HepG2 (cell line): ENCODE measurements at regions of chr2 and their contacts with region 1.

Region 1: DNA sequence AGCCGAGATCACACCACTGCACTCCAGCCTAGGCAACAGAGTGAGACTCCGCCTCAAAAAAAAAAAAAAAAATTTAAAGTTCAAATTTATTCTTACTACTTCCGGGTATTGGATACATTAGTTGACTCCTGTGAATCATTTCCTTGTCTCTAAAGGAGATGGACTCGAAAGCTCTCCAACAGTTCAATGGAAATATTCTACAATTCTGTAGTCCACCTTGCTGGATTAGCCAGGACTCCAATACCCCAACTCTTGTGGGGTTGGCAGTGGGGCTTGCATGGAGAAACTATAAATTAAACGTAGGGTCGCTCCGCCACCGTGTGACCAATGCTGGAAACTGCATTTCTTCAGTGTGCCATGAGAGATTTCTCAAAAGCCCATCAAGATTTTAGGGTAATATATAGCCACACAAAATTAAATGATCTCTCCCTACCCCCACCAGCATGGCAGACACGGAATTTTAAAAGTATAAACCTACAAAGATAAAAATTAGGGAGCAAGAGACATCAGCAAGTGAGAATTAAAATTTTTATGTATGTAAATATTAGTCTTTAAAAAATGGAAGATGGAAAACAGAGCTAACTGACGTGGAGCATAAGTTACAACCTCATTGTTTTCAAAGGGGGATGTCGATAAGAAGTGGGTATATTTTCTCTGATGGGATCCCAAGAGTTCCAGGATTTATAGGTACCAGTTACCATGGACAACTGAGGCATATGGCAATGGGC is 27.8 kb upstream of the GAREM2 start:
- DNase-seq: peak; percentile 69
- ATAC-seq: peak; percentile 58
- H3K4me3 ChIP-seq: no peak overlapping the region
- H3K27ac ChIP-seq: no peak overlapping the region
- H3K4me1 ChIP-seq: no peaks in the 10 kb centered on the region
- H3K27me3 ChIP-seq: peaks cover under 1 to 13% of the 10 kb centered on the region in 2 experiments; a peak in 2 of 5 replicates
- CTCF ChIP-seq: peak; percentile 83
- EP300 ChIP-seq: no peak
- POLR2A ChIP-seq: no peak
- RAD21 ChIP-seq: peak; percentile 86

Region 2: DNA sequence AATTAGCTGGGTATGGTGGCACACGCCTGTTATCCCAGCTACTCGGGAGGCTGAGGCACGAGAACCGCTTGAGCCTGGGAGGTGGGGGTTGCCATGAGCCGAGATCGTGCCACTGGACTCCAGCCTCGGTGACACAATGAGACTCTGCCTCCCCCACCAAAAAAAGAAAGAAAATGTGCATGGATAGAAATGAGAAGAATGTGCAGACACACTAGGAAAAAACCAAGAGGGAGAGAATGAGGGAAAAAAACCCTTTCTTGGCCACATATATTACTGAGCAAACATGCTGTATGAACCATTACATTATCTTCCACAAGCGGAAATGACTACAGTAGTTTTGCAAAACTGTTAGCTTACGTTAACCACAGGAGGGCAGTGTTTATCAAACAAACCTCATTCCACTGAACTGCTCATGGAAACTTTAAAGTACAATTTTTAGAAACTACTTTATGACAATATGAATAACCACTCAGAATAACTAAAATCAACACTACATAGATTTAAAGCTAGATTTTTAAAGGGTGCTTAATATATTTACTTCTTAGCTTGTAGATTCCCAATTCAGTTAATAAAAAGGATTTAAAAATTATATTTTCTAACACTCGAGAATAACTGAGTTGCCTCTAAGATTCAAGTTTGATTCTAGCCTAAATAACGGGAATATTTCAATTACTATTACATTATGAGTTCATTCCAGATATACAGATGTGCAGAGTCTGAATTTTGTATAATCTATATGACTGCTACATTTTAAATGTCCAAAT is 293.2 kb before region 1 on chr2:
- CTCF ChIA-PET with region 1: no interaction called
- POLR2A ChIA-PET with region 1: no interaction called
- in situ Hi-C with region 1: loop called (anchors 10 kb)
- intact Hi-C with region 1: loop called (anchors 2 kb)
- DNase-seq: peak; percentile 86
- ATAC-seq: peak; percentile 92
- H3K4me3 ChIP-seq: no peak overlapping the region; a peak in 1 of 6 replicates
- H3K27ac ChIP-seq: peak overlapping the region; percentile 50
- H3K4me1 ChIP-seq: peaks cover 21% of the 10 kb centered on the region
- H3K27me3 ChIP-seq: no peaks in the 10 kb centered on the region
- CTCF ChIP-seq: peak; percentile 87
- EP300 ChIP-seq: peak in 1 of 2 experiments; percentile 35; a peak in 1 of 4 replicates
- POLR2A ChIP-seq: no peak
- RAD21 ChIP-seq: peak; percentile 85

Region 3: GRCh38 chr2:25951071-25951547 is 194.0 kb before region 1 on chr2:
- CTCF ChIA-PET with region 1: interaction called, 32 read pairs
- POLR2A ChIA-PET with region 1: no interaction called
- in situ Hi-C with region 1: loop called (anchors 5 kb)
- intact Hi-C with region 1: loop called (anchors 1 kb)
- DNase-seq: peak; percentile 83
- ATAC-seq: peak; percentile 85
- H3K4me3 ChIP-seq: peak overlapping the region in 1 of 3 experiments; percentile 14; a peak in 1 of 6 replicates
- H3K27ac ChIP-seq: no peak overlapping the region
- H3K4me1 ChIP-seq: peaks cover 39% of the 10 kb centered on the region
- H3K27me3 ChIP-seq: no peaks in the 10 kb centered on the region
- CTCF ChIP-seq: peak; percentile 98
- EP300 ChIP-seq: 0 out of 4 replicates have a peak, but pooled peaks of 1 of the 2 experiments have one; percentile 15
- POLR2A ChIP-seq: no peak
- RAD21 ChIP-seq: peak; percentile 98

Region 4: DNA sequence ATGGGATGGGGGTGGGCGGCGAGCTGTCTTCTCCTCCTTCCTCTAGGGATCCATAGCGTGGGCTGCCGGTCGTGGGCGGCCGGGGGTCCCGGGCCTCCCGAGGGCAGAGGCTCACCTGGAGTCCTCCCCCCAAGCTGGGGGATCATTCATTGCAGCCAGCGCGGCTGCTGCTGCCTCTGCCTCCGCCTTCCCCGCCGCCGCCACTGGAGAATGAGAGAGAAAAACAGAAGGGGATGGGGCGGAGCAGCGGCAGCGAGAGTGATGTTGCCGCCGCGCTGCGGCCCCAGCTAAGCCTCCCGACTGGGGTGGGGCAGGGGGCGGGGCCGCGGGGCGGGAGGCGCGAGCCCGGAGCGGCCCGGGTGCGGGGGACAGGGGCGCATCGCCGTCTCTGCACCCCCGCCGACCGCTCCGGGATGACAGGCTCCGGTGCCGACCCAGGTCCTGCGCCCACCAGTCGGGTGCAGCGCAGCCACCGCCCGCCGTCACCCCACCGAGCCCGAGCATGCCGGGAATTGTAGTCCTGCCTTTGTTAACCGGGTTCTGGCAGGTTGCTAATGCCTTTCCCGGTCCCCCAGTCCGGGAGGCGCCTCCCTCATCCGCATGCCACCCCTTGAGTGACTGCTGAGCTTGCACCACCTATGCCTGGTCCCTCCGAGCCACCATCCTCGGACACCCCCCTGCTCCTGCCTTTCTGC is 162.7 kb before region 1 on chr2 and contains the start of gene KIF3C:
- CTCF ChIA-PET with region 1: interaction called, 10 read pairs
- POLR2A ChIA-PET with region 1: no interaction called
- in situ Hi-C with region 1: loop called (anchors 5 kb)
- intact Hi-C with region 1: no loop called
- DNase-seq: peak; percentile 66
- ATAC-seq: peak; percentile 86
- H3K4me3 ChIP-seq: peak within 1 kb of the TSS; percentile 80 to 90 (median 86)
- H3K27ac ChIP-seq: no peak within 1 kb of the TSS
- H3K4me1 ChIP-seq: peaks cover 49% of the 10 kb centered on the region
- H3K27me3 ChIP-seq: no peaks in the 10 kb centered on the region
- CTCF ChIP-seq: peak; percentile 19; the same call in 1 of the 2 replicates
- EP300 ChIP-seq: no peak
- POLR2A ChIP-seq: no peak
- RAD21 ChIP-seq: no peak
- total RNA-seq, gene KIF3C: 3.4 and 3.6 TPM in 2 replicates

Region 5: GRCh38 chr2:25991965-25992364 is 153.2 kb before region 1 on chr2:
- CTCF ChIA-PET with region 1: interaction called, 13 read pairs
- POLR2A ChIA-PET with region 1: no interaction called
- in situ Hi-C with region 1: no loop called
- intact Hi-C with region 1: loop called (anchors 2 kb)
- DNase-seq: no peak
- ATAC-seq: peak; percentile 47
- H3K4me3 ChIP-seq: no peak overlapping the region
- H3K27ac ChIP-seq: no peak overlapping the region
- H3K4me1 ChIP-seq: peaks cover 37% of the 10 kb centered on the region
- H3K27me3 ChIP-seq: peaks cover 0 to 1% of the 10 kb centered on the region in 2 experiments; a peak in 1 of 5 replicates
- CTCF ChIP-seq: no peak
- EP300 ChIP-seq: no peak
- POLR2A ChIP-seq: no peak
- RAD21 ChIP-seq: no peak

Region 6: DNA sequence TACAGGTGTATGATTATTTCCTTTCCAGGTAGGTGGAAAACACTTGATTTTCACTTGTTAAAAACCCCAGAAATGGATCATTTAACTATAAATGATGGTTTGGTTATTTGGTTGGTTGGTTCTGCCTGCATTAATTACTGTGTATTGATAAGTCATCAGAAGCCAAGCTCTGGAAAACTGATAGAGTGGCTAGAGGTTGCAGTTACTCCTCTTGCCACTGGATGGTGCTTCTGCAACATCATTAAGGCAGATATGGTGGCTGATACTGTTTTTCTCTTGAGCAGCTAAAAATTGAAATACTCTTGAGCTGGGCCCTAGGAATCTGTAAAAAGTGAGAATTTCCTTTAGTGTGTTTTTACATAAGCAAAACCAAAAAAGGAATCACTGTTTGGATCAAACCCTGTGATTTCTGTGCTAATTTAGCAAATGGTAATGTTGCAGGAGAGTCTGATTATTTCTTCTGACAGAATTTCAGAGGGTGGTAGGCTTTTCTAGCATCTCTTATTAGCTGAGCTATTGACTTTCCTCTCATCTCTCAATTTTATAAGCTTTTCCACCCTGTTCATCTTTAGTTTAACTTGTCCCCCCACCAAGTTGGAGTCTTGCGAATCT is 57.0 kb before region 1 on chr2:
- CTCF ChIA-PET with region 1: interaction called, 14 read pairs
- POLR2A ChIA-PET with region 1: no interaction called
- in situ Hi-C with region 1: no loop called
- intact Hi-C with region 1: loop called (anchors 1 kb)
- DNase-seq: peak; percentile 42
- ATAC-seq: peak; percentile 91
- H3K4me3 ChIP-seq: no peak overlapping the region
- H3K27ac ChIP-seq: no peak overlapping the region
- H3K4me1 ChIP-seq: 0 out of 2 replicates have a peak, but pooled peaks cover 11% of the 10 kb centered on the region
- H3K27me3 ChIP-seq: no peaks in the 10 kb centered on the region
- CTCF ChIP-seq: peak; percentile 80
- EP300 ChIP-seq: no peak
- POLR2A ChIP-seq: no peak
- RAD21 ChIP-seq: peak; percentile 38; the same call in 1 of the 2 replicates